ENCODE measurements at regions of chr20 and their contacts with region 1.

Region 1: DNA sequence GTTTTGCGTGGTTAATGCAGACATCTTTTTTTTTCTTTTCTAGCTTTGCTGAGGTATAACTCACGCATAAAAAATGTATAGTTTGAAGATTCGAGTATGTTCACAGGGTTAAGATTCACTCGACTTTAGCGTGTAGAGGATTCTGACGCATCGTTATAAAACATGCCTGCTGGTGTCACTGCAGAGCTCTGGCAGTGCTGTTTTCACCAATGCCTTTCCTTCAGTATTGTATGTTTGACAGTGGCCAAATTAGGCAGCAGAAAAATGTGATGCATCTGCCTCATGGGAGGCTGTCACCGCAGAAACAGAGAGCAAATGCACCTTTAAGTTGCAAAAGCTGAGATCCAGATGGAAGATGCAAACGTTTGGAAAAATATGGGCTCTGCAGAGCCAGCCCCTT is 18.0 kb upstream of the SIRPB2 start:
- DNase-seq: peak; percentile 56 to 80 (median 79)
- H3K4me3 ChIP-seq: no peak overlapping the region
- H3K27ac ChIP-seq: no peak overlapping the region
- H3K4me1 ChIP-seq: peaks cover 0 to 5% (median 1%) of the 10 kb centered on the region in 4 experiments
- H3K27me3 ChIP-seq: no peaks in the 10 kb centered on the region

Region 2: GRCh38 chr20:1341561-1342265 is 167.5 kb before region 1 on chr20:
- CTCF ChIA-PET with region 1: no interaction called
- POLR2A ChIA-PET with region 1: no interaction called
- DNase-seq: no peak
- H3K4me3 ChIP-seq: no peak overlapping the region
- H3K27ac ChIP-seq: no peak overlapping the region
- H3K4me1 ChIP-seq: peaks cover 0 to 15% (median 5%) of the 10 kb centered on the region in 4 experiments
- H3K27me3 ChIP-seq: no peaks in the 10 kb centered on the region

Region 3: GRCh38 chr20:1524004-1524403 is 14.8 kb after region 1 on chr20:
- CTCF ChIA-PET with region 1: interaction called, 24 read pairs
- POLR2A ChIA-PET with region 1: interaction called, 4 read pairs
- DNase-seq: peak; percentile 92 to 95 (median 93)
- H3K4me3 ChIP-seq: peak overlapping the region in 2 of 7 experiments; percentile 11 to 27
- H3K27ac ChIP-seq: peak overlapping the region in 1 of 2 experiments; percentile 67
- H3K4me1 ChIP-seq: peaks cover 4 to 37% (median 29%) of the 10 kb centered on the region in 4 experiments
- H3K27me3 ChIP-seq: no peaks in the 10 kb centered on the region

Region 4: GRCh38 chr20:1533059-1533458 is 23.8 kb after region 1 on chr20:
- CTCF ChIA-PET with region 1: interaction called, 11 read pairs
- POLR2A ChIA-PET with region 1: no interaction called
- DNase-seq: peak; percentile 18 to 24 (median 23)
- H3K4me3 ChIP-seq: no peak overlapping the region
- H3K27ac ChIP-seq: no peak overlapping the region
- H3K4me1 ChIP-seq: peaks cover 5 to 24% (median 15%) of the 10 kb centered on the region in 4 experiments
- H3K27me3 ChIP-seq: no peaks in the 10 kb centered on the region

Region 5: GRCh38 chr20:1569417-1569881 is 60.2 kb after region 1 on chr20:
- CTCF ChIA-PET with region 1: interaction called, 15 read pairs
- POLR2A ChIA-PET with region 1: no interaction called
- DNase-seq: peak; percentile 33 to 66 (median 57)
- H3K4me3 ChIP-seq: no peak overlapping the region
- H3K27ac ChIP-seq: no peak overlapping the region
- H3K4me1 ChIP-seq: peaks cover 0 to 6% (median under 1%) of the 10 kb centered on the region in 4 experiments
- H3K27me3 ChIP-seq: peaks cover 0 to 43% (median 0%) of the 10 kb centered on the region in 5 experiments

Region 6: GRCh38 chr20:1776681-1777475 is 267.6 kb after region 1 on chr20:
- CTCF ChIA-PET with region 1: interaction called, 25 read pairs
- POLR2A ChIA-PET with region 1: no interaction called
- DNase-seq: peak; percentile 70 to 82 (median 77)
- H3K4me3 ChIP-seq: peak overlapping the region; percentile 66 to 78 (median 74)
- H3K27ac ChIP-seq: peak overlapping the region; percentile 33 to 69
- H3K4me1 ChIP-seq: peaks cover 0 to 9% (median 9%) of the 10 kb centered on the region in 4 experiments
- H3K27me3 ChIP-seq: peaks cover 0 to 5% (median 0%) of the 10 kb centered on the region in 5 experiments

Region 7: DNA sequence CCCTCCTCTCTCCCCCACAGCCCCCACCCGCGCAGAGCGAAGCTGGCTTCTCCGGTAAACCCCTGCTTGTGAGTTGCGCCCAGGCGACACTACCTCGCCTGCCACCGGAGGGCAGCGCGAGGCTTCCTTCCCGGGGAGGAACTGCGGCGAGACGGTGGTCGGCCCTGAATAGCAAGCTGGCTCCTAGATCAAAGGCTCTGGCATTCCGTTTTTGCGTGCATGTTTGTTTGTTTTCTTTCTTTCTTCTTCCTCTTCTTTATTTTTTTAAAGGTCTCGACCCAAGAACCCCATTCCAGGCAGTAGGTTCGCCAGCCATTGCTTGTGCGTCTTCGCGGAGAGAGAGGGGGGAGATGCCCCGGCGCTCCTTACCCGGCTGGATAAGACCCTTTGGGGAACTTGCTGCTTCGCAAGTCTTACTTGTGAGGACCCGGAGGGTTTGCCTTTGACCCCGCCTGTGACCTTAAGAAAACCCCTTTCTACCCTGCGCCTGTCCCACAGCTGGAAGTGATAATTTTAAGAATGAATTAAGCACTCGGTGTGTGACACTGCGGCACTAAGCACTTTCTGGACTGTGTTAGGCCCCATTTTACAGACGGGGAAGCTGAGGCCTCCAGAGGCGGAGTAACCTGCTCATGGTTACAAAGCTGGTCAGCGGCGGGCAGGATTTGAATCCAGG is 293.3 kb after region 1 on chr20:
- CTCF ChIA-PET with region 1: interaction called, 10 read pairs
- POLR2A ChIA-PET with region 1: no interaction called
- DNase-seq: peak; percentile 89 to 94 (median 92)
- H3K4me3 ChIP-seq: peak overlapping the region; percentile 67 to 88 (median 74)
- H3K27ac ChIP-seq: no peak overlapping the region
- H3K4me1 ChIP-seq: peaks cover 7 to 29% (median 26%) of the 10 kb centered on the region in 4 experiments
- H3K27me3 ChIP-seq: no peaks in the 10 kb centered on the region

Region 8: GRCh38 chr20:1934721-1935573 is 425.7 kb after region 1 on chr20:
- CTCF ChIA-PET with region 1: no interaction called
- POLR2A ChIA-PET with region 1: no interaction called
- DNase-seq: no peak
- H3K4me3 ChIP-seq: no peak overlapping the region
- H3K27ac ChIP-seq: no peak overlapping the region
- H3K4me1 ChIP-seq: no peaks in the 10 kb centered on the region
- H3K27me3 ChIP-seq: no peaks in the 10 kb centered on the region

Measured in common myeloid progenitor, CD34-positive (primary cell).